BJ (cell line): ENCODE measurements at regions of chr1 and their contacts with region 1.

Region 1: GRCh38 chr1:34786521-34787325 is 5.7 kb downstream of the GJB3 start:
- DNase-seq: no peak
- H3K4me3 ChIP-seq: no peak overlapping the region
- H3K27me3 ChIP-seq: peaks cover 10% of the 10 kb centered on the region
- CTCF ChIP-seq: peak; percentile 84

Region 2: GRCh38 chr1:34796990-34797389 is 10.3 kb after region 1 on chr1:
- CTCF ChIA-PET with region 1: interaction called, 13 read pairs
- POLR2A ChIA-PET with region 1: no interaction called
- DNase-seq: no peak
- H3K4me3 ChIP-seq: no peak overlapping the region
- H3K27me3 ChIP-seq: peaks cover 12% of the 10 kb centered on the region
- CTCF ChIP-seq: no peak

Region 3: GRCh38 chr1:34839526-34840305 is 53.0 kb after region 1 on chr1:
- CTCF ChIA-PET with region 1: no interaction called
- POLR2A ChIA-PET with region 1: no interaction called
- DNase-seq: no peak
- H3K4me3 ChIP-seq: no peak overlapping the region
- H3K27me3 ChIP-seq: no peaks in the 10 kb centered on the region
- CTCF ChIP-seq: no peak